HAP-1 (cell line): ENCODE measurements at regions of chr10 and their contacts with region 1.

Region 1: GRCh38 chr10:45464958-45465567 is 91.0 kb downstream of the ALOX5 start:
- DNase-seq: peak; percentile 62 to 87
- H3K4me3 ChIP-seq: no peak overlapping the region
- H3K4me1 ChIP-seq: peaks cover 2% of the 10 kb centered on the region
- H3K27me3 ChIP-seq: no peaks in the 10 kb centered on the region

Region 2: GRCh38 chr10:45008524-45009161 is 456.4 kb before region 1 on chr10:
- in situ Hi-C with region 1: loop called (anchors 25 kb)
- DNase-seq: peak; percentile 65 to 91
- H3K4me3 ChIP-seq: no peak overlapping the region
- H3K4me1 ChIP-seq: peaks cover 3% of the 10 kb centered on the region; the same call in 1 of the 2 replicates
- H3K27me3 ChIP-seq: no peaks in the 10 kb centered on the region

Region 3: GRCh38 chr10:45249978-45250693 is 214.9 kb before region 1 on chr10:
- in situ Hi-C with region 1: loop called (anchors 10 kb)
- DNase-seq: peak in 1 of 2 experiments; percentile 64
- H3K4me3 ChIP-seq: no peak overlapping the region
- H3K4me1 ChIP-seq: no peaks in the 10 kb centered on the region
- H3K27me3 ChIP-seq: no peaks in the 10 kb centered on the region

Region 4: GRCh38 chr10:45672181-45673073 is 207.4 kb after region 1 on chr10 and contains the start of gene ZFAND4:
- in situ Hi-C with region 1: loop called (anchors 25 kb)
- DNase-seq: peak; percentile 88 to 97
- H3K4me3 ChIP-seq: peak within 1 kb of the TSS; percentile 43
- H3K4me1 ChIP-seq: no peaks in the 10 kb centered on the region
- H3K27me3 ChIP-seq: no peaks in the 10 kb centered on the region